ENCODE measurements at regions of chr2 and their contacts with region 1.

Region 1: DNA sequence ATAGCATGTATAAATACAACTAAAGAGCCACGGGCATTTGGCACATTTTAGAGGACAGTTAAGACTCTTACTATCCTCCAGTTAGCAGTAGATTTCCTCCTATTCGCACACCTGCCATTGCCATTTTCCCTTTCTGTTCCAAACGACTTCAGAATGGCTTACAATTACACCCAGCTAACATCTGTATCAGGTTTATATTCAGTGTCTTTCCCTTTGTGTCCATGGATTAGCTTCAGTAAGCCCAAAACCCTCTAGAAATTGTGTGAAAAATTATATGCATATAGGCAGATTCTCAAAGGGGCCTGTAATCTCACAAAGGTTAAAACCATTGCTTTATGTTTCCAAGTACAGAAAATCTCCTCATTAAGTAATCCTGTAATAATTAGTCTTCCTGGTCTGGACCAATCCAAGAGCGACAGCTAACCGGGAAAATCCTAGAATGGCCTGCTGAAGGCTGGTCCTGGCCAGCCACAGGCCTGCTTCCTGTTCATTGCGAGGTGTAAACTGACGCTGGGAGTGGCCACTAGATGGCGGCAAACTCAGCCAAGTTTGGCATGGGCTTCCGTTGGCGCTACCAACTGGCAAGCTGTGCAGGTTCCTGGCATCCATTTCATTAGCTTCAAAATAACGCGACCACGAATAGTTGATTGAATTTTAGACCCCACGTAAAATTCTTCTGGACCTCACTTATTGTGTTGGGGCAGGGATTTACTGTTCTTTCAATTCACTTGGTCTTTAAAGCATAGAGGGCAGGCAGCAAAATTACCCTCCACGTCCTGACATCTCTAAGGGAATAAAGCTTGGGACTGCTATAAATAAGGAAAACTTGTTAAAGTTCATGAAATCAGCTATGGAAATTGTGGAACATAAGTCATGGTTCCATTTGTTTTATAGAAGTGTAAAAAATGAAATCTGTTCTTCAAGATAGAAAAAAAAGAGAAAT is 17.1 kb downstream of the ARHGAP25 start:
- DNase-seq: peak; percentile 75
- CTCF ChIP-seq: peak; percentile 96

Region 2: GRCh38 chr2:68721482-68722101 is 30.1 kb before region 1 on chr2:
- CTCF ChIA-PET with region 1: interaction called, 28 read pairs
- POLR2A ChIA-PET with region 1: no interaction called
- DNase-seq: no peak
- CTCF ChIP-seq: no peak

Region 3: DNA sequence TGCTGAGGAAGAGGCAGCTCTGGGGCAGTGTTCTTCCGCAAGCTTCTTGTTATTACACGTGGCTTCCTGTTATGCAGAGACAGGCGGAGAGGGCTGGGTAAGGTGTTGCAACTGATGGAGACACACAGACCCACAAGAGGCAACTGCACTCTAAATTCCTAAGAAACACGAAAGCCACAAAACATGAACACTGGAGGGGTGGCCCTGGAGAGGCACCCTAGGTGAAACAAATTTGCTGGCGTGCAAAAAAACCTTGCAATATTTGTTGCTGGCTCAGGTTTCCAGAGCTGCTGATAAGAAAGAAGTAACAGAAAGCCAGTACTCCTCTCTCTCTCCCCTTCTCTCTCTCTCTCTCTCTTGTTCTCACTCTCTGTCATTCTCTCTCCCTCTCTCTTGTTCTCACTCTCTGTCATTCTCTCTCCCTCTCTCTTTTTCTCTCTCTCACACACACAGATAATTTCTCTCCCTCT is 14.7 kb after region 1 on chr2:
- CTCF ChIA-PET with region 1: interaction called, 61 read pairs
- POLR2A ChIA-PET with region 1: no interaction called
- DNase-seq: no peak
- CTCF ChIP-seq: no peak

Region 4: DNA sequence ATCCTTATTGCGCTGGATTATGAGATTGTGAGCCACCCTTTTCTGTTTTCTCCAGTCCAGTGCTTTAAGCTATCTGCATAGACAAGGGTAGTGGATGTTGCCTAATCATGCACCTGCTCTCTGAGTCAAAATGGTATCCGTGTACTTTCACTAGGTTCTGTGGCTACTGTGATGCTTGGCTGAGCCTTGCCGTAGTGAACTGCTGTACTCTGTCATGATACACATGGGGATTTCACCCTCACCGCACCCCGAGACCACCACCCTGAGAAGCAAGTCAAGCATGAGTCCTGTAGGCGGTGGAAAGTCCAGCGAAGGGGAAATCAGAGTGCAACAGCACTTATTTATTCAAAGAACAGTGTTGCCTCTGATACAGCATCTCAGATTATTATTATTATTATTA is 37.9 kb after region 1 on chr2:
- CTCF ChIA-PET with region 1: interaction called, 53 read pairs
- POLR2A ChIA-PET with region 1: no interaction called
- DNase-seq: peak; percentile 87
- CTCF ChIP-seq: no peak

Region 5: DNA sequence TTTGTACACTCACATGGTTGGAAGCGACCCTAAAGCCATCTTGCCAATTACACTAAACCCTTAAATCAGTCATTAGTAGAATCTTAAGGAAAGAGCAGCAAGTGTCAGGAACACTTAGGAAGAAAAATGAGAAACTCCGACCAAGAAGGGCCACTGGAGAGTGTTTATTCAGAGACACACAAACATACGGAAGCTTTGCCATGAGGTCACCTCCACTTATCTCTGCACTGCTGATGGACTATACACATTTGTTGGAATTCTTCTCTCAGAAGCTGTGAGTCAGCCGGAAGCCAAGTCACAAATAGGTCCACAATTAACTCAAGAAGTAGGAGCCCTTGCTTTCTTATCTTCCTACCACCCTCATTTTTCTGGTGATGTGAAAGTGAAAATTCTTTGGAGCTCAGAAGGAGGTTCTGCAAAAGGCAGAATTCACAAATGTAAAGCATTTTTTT is 97.9 kb after region 1 on chr2:
- CTCF ChIA-PET with region 1: interaction called, 10 read pairs
- POLR2A ChIA-PET with region 1: no interaction called
- DNase-seq: no peak
- CTCF ChIP-seq: no peak

Region 6: GRCh38 chr2:69149631-69150215 is 398.1 kb after region 1 on chr2:
- CTCF ChIA-PET with region 1: no interaction called
- POLR2A ChIA-PET with region 1: no interaction called
- DNase-seq: no peak
- CTCF ChIP-seq: no peak

Measured in GM10248 (cell line).